GM12878 (cell line): ENCODE measurements at regions of chr9 and their contacts with region 1.

Region 1: GRCh38 chr9:133121198-133121939 is at the start of gene RALGDS:
- DNase-seq: no peak
- ATAC-seq: peak; percentile 68
- H3K4me3 ChIP-seq: peak within 1 kb of the TSS; percentile 91
- H3K27ac ChIP-seq: peak within 1 kb of the TSS; percentile 81
- H3K4me1 ChIP-seq: peaks cover 53% of the 10 kb centered on the region
- H3K27me3 ChIP-seq: no peaks in the 10 kb centered on the region
- CTCF ChIP-seq: no peak
- EP300 ChIP-seq: no peak
- POLR2A ChIP-seq: no peak
- RAD21 ChIP-seq: no peak
- polyA plus RNA-seq, gene RALGDS: 1.3 to 2.0 TPM

Region 2: GRCh38 chr9:133133681-133134418 is 12.5 kb after region 1 on chr9:
- CTCF ChIA-PET with region 1: interaction called, 5 read pairs
- POLR2A ChIA-PET with region 1: interaction called, 26 read pairs
- RAD21 ChIA-PET with region 1: interaction called, 9 read pairs
- SMC1A ChIA-PET with region 1: interaction called, 11 read pairs
- in situ Hi-C with region 1: no loop called
- intact Hi-C with region 1: no loop called
- DNase-seq: no peak
- ATAC-seq: peak; percentile 93
- H3K4me3 ChIP-seq: no peak overlapping the region
- H3K27ac ChIP-seq: peak overlapping the region; percentile 88
- H3K4me1 ChIP-seq: peaks cover 39% of the 10 kb centered on the region
- H3K27me3 ChIP-seq: no peaks in the 10 kb centered on the region
- CTCF ChIP-seq: peak in 1 of 3 experiments; percentile 5; a peak in 1 of 6 replicates
- EP300 ChIP-seq: peak; percentile 88 to 98
- POLR2A ChIP-seq: peak; percentile 70
- RAD21 ChIP-seq: no peak

Region 3: DNA sequence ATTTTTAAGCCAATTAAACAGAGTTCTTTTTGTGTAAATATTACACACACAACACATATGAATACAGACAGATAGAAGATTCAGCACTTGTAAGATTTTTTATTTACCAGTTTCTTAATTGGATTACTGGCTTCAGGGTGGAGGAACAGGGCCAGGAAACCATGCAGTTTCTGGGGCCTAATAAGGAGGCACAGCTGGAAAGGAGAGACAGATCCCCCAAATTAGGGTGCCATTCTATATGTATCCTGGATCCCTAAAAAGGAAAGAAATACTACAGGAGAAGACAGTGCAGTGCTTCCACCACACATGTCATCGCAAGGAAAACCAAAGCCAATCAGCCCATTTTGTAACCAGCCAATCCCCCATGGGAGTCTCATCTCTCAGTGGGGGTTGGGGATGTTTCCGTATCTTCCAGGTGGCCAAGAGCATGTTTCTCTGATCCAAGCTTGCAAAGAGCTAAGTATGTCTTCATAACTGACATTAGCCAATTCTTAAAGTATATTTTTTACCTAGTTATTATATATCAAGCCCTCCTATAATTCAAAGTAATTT is 169.5 kb after region 1 on chr9:
- CTCF ChIA-PET with region 1: no interaction called
- POLR2A ChIA-PET with region 1: no interaction called
- RAD21 ChIA-PET with region 1: no interaction called
- SMC1A ChIA-PET with region 1: no interaction called
- in situ Hi-C with region 1: no loop called
- intact Hi-C with region 1: no loop called
- DNase-seq: no peak
- ATAC-seq: no peak
- H3K4me3 ChIP-seq: no peak overlapping the region
- H3K27ac ChIP-seq: no peak overlapping the region
- H3K4me1 ChIP-seq: no peaks in the 10 kb centered on the region
- H3K27me3 ChIP-seq: no peaks in the 10 kb centered on the region
- CTCF ChIP-seq: no peak
- EP300 ChIP-seq: no peak
- POLR2A ChIP-seq: no peak
- RAD21 ChIP-seq: no peak